Right cardiac atrium (tissue), 5 donors: ENCODE measurements at regions of chr5 and their contacts with region 1.

Region 1: DNA sequence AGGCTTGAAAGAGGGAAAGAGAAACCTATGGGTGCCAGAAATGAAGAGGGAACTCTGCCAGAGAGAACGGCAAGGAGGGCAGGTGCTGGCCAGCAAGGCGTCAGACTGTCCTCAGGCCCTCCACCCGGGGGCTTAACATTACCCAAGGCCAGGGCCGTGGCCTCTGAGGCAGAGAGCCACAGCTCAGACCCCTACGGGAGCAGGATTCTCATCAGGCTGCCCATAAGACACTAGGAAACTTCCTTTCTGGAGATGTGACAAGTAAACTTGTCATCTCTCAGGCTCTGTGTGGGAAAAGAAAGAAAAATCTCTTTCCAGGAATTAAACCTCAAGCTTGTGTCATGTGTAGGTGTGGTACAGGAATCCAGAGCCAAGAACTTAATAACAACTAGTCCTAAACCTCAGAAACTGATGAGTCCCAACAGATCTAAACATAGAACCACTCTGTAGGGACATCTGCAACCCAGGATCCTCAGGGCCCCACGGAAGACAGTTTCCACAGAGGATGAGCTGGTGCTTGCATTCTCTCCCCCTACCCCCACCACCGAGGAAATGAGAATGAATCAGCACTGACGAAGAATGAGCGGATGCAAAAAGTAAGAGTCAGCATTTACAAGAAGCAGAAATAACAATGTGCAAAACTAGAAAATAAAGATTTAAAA is 74.3 kb downstream of the DCP2 start:
- DNase-seq: no peak
- ATAC-seq: peak; percentile 9 to 63
- H3K4me3 ChIP-seq: no peak overlapping the region
- H3K27ac ChIP-seq: no peak overlapping the region
- H3K4me1 ChIP-seq: peaks cover 9% of the 10 kb centered on the region
- H3K27me3 ChIP-seq: no peaks in the 10 kb centered on the region

Region 2: DNA sequence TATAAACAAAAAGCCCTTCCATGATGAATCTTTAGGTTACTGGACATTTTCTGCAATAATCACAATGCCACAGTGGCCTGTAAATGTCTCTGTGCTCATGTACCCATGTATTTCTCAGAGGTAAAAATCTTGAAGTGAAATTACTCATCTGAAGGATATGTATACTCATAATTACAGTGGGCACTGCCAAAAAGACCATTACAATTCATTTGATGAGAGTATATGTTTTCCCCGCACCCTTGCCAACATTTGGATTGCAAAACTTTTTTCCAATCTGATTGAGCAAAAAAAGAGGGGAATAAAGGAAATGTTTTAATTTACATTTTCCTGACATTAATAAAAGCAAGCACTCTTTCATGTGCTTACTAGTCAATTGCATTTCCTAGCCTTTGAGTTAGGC is 742.2 kb before region 1 on chr5:
- intact Hi-C with region 1: no loop called
- DNase-seq: no peak
- ATAC-seq: no peak
- H3K4me3 ChIP-seq: no peak overlapping the region
- H3K27ac ChIP-seq: no peak overlapping the region
- H3K4me1 ChIP-seq: peaks cover 4% of the 10 kb centered on the region
- H3K27me3 ChIP-seq: no peaks in the 10 kb centered on the region

Region 3: GRCh38 chr5:113320273-113320780 is 269.5 kb after region 1 on chr5:
- intact Hi-C with region 1: loop called in 1 of 4 experiments (anchors 10 kb)
- DNase-seq: no peak
- ATAC-seq: peak in 1 of 2 donors; percentile 56
- H3K4me3 ChIP-seq: no peak overlapping the region
- H3K27ac ChIP-seq: no peak overlapping the region
- H3K4me1 ChIP-seq: no peaks in the 10 kb centered on the region
- H3K27me3 ChIP-seq: no peaks in the 10 kb centered on the region